Posterior cingulate gyrus (tissue), 11 donors: ENCODE measurements at regions of chr16 and their contacts with region 1.

Region 1: DNA sequence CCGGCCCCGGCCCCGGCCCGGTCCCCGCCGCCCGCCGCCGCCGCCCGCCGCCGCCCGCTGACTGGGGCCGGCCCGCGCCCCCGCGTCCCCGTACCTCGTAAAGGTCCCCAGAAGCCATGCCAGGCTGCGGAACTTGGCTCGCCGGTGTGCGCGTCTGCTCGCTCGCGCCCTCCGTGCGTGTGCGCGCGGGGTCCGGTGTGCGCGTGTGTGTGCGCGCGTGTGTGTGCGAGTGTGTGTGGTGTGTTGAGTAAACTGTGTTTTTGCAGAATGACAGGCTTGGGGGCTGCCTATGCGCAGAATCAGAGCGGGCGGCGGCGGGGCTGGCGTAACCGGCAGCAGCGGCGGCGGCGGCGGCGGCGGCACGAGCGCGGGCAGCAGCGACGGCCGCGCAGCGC is 345 bp downstream of the CDYL2 start:
- DNase-seq: peak; percentile 22 to 93 (median 52)

Region 2: GRCh38 chr16:80507538-80507937 is 296.5 kb before region 1 on chr16:
- intact Hi-C with region 1: no loop called
- DNase-seq: no peak

Region 3: GRCh38 chr16:80518436-80518835 is 285.6 kb before region 1 on chr16:
- intact Hi-C with region 1: no loop called
- DNase-seq: no peak

Region 4: GRCh38 chr16:80540516-80541272 is 263.4 kb before region 1 on chr16 and contains the start of gene DYNLRB2:
- intact Hi-C with region 1: loop called (anchors 2 kb)
- DNase-seq: peak; percentile 90 to 99 (median 92)

Region 5: GRCh38 chr16:80710918-80711317 is 93.1 kb before region 1 on chr16:
- intact Hi-C with region 1: no loop called
- DNase-seq: no peak

Region 6: GRCh38 chr16:80883159-80883642 is 79.1 kb after region 1 on chr16:
- intact Hi-C with region 1: no loop called
- DNase-seq: no peak